ENCODE measurements at regions of chr20 and their contacts with region 1.

Region 1: DNA sequence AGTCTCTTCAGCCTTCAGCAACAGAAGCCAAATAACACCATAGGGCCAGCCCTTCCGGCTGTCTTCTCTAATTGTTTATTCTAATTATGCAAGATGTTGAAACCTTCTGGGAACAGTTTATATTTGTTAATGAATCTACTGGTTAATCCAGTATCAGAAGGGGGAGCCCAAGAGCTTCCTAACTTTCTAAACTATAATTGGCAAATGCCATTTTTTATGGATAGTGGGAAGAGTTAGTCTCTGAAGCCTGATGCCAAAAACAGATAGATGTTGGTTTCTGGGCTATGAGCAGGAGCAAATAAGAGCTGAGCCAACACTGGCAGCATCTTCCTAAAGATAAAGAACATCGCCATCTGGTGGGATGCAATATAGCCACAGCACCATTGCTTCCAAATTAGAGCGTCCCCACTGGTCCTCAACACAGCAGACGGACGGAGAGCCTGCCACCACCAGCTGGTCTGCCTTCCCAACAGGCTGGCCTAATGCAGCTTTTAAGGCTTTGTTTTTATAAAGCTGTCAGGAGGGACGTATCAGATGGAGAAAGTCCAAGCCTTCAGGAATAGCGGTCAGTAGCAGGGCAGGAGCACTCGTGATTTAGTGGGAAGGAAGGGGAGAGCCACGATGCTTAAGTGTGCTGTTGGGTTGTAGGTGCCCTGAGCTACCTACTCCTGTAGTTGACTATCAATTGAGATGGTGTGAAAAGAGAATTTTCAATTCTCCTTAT is 118.8 kb downstream of the RALGAPA2 start:
- DNase-seq: peak; percentile 63
- ATAC-seq: peak; percentile 98
- H3K4me3 Mint-ChIP-seq: no peak overlapping the region
- H3K27ac Mint-ChIP-seq: no peak overlapping the region
- H3K4me1 Mint-ChIP-seq: no peaks in the 10 kb centered on the region
- H3K27me3 Mint-ChIP-seq: no peaks in the 10 kb centered on the region
- CTCF ChIP-seq: no peak

Region 2: DNA sequence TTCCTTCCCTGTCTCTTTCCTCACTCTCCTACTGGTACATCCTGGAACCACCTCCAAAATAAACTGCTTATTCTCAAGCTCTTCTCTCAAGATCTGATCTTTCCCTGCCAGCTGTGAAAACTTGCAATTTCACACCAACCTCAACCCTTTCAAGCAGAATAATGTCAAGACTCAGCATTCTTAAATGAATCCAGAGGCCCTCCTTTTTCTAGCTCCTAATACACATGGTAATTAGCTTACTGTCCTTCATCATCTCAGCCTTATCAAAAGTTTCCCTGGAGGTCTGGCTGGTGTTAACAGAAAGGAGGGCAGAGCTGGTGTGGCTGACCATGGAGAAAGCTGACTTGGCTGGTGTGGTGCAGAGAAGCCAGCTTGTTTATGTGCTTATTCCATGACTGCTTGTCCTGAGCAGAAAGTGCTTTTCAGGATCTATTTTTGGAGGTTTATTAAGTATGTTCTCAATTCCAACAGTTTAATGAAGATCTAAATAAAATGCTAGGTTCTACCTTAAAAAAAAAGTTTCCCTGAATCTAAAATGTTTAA is 490.8 kb before region 1 on chr20:
- CTCF ChIA-PET with region 1: interaction called, 11 read pairs
- POLR2A ChIA-PET with region 1: no interaction called
- DNase-seq: no peak
- ATAC-seq: no peak
- H3K4me3 Mint-ChIP-seq: no peak overlapping the region
- H3K27ac Mint-ChIP-seq: no peak overlapping the region
- H3K4me1 Mint-ChIP-seq: peaks cover 13% of the 10 kb centered on the region
- H3K27me3 Mint-ChIP-seq: no peaks in the 10 kb centered on the region; the same call in 1 of the 2 replicates
- CTCF ChIP-seq: no peak

Region 3: GRCh38 chr20:20207872-20208271 is 385.7 kb before region 1 on chr20:
- CTCF ChIA-PET with region 1: interaction called, 11 read pairs
- POLR2A ChIA-PET with region 1: no interaction called
- DNase-seq: no peak
- ATAC-seq: no peak
- H3K4me3 Mint-ChIP-seq: no peak overlapping the region
- H3K27ac Mint-ChIP-seq: no peak overlapping the region
- H3K4me1 Mint-ChIP-seq: peaks cover 45% of the 10 kb centered on the region
- H3K27me3 Mint-ChIP-seq: no peaks in the 10 kb centered on the region
- CTCF ChIP-seq: no peak

Region 4: DNA sequence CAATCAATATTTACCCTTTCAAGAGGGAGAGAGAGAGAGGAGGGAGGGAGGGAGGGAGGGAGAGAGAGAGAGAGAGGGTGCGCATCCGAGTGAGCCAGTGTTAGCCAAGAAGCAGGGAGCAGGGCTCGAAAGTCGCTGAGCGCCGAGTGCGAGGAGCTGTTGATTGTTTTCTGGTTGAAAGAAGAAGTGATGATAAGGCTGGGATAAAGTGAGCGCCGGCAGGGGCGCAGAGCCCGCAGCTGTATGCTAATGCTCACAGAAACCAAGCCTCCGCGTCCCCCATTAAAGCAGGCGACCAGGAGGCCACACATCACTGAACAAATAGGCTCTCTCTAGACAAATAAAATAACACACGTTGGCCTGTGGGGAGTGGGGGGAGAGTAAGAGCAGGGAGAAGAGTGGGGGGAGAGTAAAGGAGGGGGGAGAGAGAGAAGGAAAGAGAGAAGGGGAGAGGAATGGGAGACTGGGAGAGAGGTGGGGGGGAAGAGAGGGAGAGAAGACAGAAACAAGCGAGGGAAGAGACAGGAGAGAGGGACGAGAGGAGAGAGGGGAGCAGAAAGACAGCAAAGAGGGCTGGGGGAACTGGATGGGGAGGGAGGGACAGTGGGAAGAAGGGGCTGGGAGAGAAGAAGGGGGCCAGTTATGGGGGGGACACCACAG is 230.7 kb before region 1 on chr20:
- CTCF ChIA-PET with region 1: interaction called, 11 read pairs
- POLR2A ChIA-PET with region 1: no interaction called
- DNase-seq: peak; percentile 65
- ATAC-seq: peak; percentile 4
- H3K4me3 Mint-ChIP-seq: peak overlapping the region; percentile 76
- H3K27ac Mint-ChIP-seq: no peak overlapping the region; the same call in 1 of the 2 replicates
- H3K4me1 Mint-ChIP-seq: peaks cover 31% of the 10 kb centered on the region
- H3K27me3 Mint-ChIP-seq: peaks cover 83% of the 10 kb centered on the region
- CTCF ChIP-seq: no peak

Region 5: DNA sequence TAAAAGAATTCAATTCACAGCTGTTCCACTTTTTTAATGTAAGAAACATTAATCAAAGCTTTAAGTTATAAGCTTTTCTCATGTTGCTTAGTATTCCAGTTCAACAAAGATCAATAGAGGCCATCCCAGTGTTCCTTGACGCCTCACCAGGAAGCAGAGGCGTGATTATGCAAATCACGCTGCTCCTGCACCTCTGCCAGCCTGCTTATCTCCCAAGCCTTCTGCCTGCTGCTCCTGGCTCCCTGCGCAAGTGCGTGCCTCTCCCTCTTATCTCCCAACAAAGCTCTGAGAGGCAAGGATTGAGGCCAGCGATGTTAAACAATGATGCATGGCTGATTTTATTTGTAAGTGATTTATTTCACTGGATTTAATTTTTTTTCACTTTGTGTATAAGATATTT is 182.9 kb before region 1 on chr20:
- CTCF ChIA-PET with region 1: interaction called, 14 read pairs
- POLR2A ChIA-PET with region 1: no interaction called
- DNase-seq: peak; percentile 48
- ATAC-seq: peak; percentile 91
- H3K4me3 Mint-ChIP-seq: no peak overlapping the region
- H3K27ac Mint-ChIP-seq: peak overlapping the region; percentile 27; the same call in 1 of the 2 replicates
- H3K4me1 Mint-ChIP-seq: peaks cover 61% of the 10 kb centered on the region
- H3K27me3 Mint-ChIP-seq: no peaks in the 10 kb centered on the region
- CTCF ChIP-seq: no peak

Region 6: GRCh38 chr20:20580139-20580538 is 13.5 kb before region 1 on chr20:
- CTCF ChIA-PET with region 1: interaction called, 32 read pairs
- POLR2A ChIA-PET with region 1: interaction called, 5 read pairs
- DNase-seq: no peak
- ATAC-seq: peak; percentile 52
- H3K4me3 Mint-ChIP-seq: no peak overlapping the region
- H3K27ac Mint-ChIP-seq: no peak overlapping the region; the same call in 1 of the 2 replicates
- H3K4me1 Mint-ChIP-seq: peaks cover 14% of the 10 kb centered on the region
- H3K27me3 Mint-ChIP-seq: no peaks in the 10 kb centered on the region
- CTCF ChIP-seq: no peak

Region 7: GRCh38 chr20:20824924-20825584 is 231.4 kb after region 1 on chr20:
- CTCF ChIA-PET with region 1: interaction called, 41 read pairs
- POLR2A ChIA-PET with region 1: no interaction called
- DNase-seq: peak; percentile 72
- ATAC-seq: peak; percentile 47
- H3K4me3 Mint-ChIP-seq: no peak overlapping the region
- H3K27ac Mint-ChIP-seq: no peak overlapping the region
- H3K4me1 Mint-ChIP-seq: peaks cover 36% of the 10 kb centered on the region
- H3K27me3 Mint-ChIP-seq: peaks cover 5% of the 10 kb centered on the region
- CTCF ChIP-seq: peak; percentile 84